CD8-positive, alpha-beta T cell (primary cell): ENCODE measurements at regions of chr5 and their contacts with region 1.

Region 1: DNA sequence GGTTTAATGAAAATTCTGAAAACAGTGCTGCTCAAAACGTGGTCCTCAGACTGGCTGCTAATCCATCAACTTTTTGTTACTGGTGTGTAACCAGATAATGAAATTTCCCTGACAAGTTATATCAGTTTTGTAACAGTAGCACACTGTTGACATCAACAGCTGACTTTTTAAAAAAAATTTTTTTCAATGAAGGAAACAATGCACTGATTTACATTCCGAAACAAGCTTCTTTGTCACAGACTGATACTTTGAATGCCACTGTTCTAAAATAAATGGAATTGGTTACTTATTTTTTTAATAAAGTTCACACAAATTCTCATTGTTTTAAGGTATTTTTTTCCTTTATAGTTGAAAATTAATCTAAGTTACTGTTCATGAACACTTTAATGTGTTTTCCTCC is 169.1 kb downstream of the NIPBL start:
- DNase-seq: no peak
- ATAC-seq: no peak
- H3K4me3 ChIP-seq: no peak overlapping the region
- H3K4me3 Mint-ChIP-seq: no peak overlapping the region
- H3K27ac ChIP-seq: no peak overlapping the region
- H3K27ac Mint-ChIP-seq: no peak overlapping the region
- H3K4me1 ChIP-seq: no peaks in the 10 kb centered on the region
- H3K4me1 Mint-ChIP-seq: no peaks in the 10 kb centered on the region
- H3K27me3 ChIP-seq: no peaks in the 10 kb centered on the region
- H3K27me3 Mint-ChIP-seq: no peaks in the 10 kb centered on the region
- CTCF ChIP-seq: no peak

Region 2: GRCh38 chr5:37002176-37002751 is 43.4 kb before region 1 on chr5:
- CTCF ChIA-PET with region 1: no interaction called
- POLR2A ChIA-PET with region 1: no interaction called
- intact Hi-C with region 1: no loop called
- DNase-seq: no peak
- ATAC-seq: no peak
- H3K4me3 ChIP-seq: no peak overlapping the region
- H3K4me3 Mint-ChIP-seq: no peak overlapping the region
- H3K27ac ChIP-seq: no peak overlapping the region
- H3K27ac Mint-ChIP-seq: peak overlapping the region; percentile 11
- H3K4me1 ChIP-seq: no peaks in the 10 kb centered on the region
- H3K4me1 Mint-ChIP-seq: no peaks in the 10 kb centered on the region
- H3K27me3 ChIP-seq: no peaks in the 10 kb centered on the region
- H3K27me3 Mint-ChIP-seq: no peaks in the 10 kb centered on the region
- CTCF ChIP-seq: no peak

Region 3: GRCh38 chr5:37111426-37112382 is 66.0 kb after region 1 on chr5:
- CTCF ChIA-PET with region 1: no interaction called
- POLR2A ChIA-PET with region 1: no interaction called
- intact Hi-C with region 1: loop called in 1 of 2 experiments (anchors 5 kb)
- DNase-seq: peak in 2 of 9 experiments; percentile 48 to 72
- ATAC-seq: peak; percentile 73
- H3K4me3 ChIP-seq: peak overlapping the region; percentile 13 to 32
- H3K4me3 Mint-ChIP-seq: peak overlapping the region; percentile 77
- H3K27ac ChIP-seq: no peak overlapping the region
- H3K27ac Mint-ChIP-seq: peak overlapping the region; percentile 56
- H3K4me1 ChIP-seq: peaks cover 24% of the 10 kb centered on the region
- H3K4me1 Mint-ChIP-seq: peaks cover 31% of the 10 kb centered on the region
- H3K27me3 ChIP-seq: no peaks in the 10 kb centered on the region
- H3K27me3 Mint-ChIP-seq: no peaks in the 10 kb centered on the region
- CTCF ChIP-seq: no peak